CD8-positive, alpha-beta memory T cell (primary cell): ENCODE measurements at regions of chr10 and their contacts with region 1.

Region 1: GRCh38 chr10:30534465-30535144 is 94.9 kb downstream of the LYZL2 start:
- DNase-seq: peak; percentile 48 to 81 (median 68)
- H3K4me3 ChIP-seq: no peak overlapping the region
- H3K4me3 Mint-ChIP-seq: peak overlapping the region in 1 of 7 donors; percentile 73
- H3K27ac ChIP-seq: no peak overlapping the region
- H3K27ac Mint-ChIP-seq: peak overlapping the region in 5 of 8 donors; percentile 6 to 50 (median 11)
- H3K4me1 ChIP-seq: peaks cover 22% of the 10 kb centered on the region
- H3K4me1 Mint-ChIP-seq: peaks cover 36 to 52% (median 38%) of the 10 kb centered on the region in 3 donors
- H3K27me3 ChIP-seq: no peaks in the 10 kb centered on the region
- H3K27me3 Mint-ChIP-seq: no peaks in the 10 kb centered on the region

Region 2: DNA sequence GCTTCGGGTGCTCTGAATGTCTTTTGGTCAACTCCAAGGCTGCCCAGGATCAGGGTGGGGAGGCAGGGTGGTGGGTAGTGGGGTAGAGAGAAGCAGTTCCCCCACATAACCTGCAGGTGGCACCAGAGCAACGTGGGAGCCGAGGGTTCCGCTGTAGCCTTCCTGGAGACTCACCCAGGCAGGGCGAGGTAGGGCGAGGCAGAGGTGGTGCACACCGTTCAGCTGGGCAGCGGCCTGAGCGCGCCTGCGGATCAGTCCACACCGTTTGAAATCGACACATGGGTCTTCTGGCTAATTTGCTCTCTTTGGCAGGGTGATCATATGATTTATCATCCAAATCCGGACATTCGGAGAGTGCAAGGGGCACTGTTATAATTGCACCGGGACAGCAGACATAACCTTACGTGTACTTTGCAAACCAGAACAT is 142.0 kb before region 1 on chr10:
- CTCF ChIA-PET with region 1: interaction called, 15 read pairs
- POLR2A ChIA-PET with region 1: interaction called, 3 read pairs
- DNase-seq: peak; percentile 56 to 79 (median 63)
- H3K4me3 ChIP-seq: no peak overlapping the region
- H3K4me3 Mint-ChIP-seq: peak overlapping the region in 1 of 7 donors; percentile 6
- H3K27ac ChIP-seq: no peak overlapping the region
- H3K27ac Mint-ChIP-seq: peak overlapping the region in 1 of 8 donors; percentile 40
- H3K4me1 ChIP-seq: peaks cover 4% of the 10 kb centered on the region
- H3K4me1 Mint-ChIP-seq: peaks cover 3 to 10% (median 4%) of the 10 kb centered on the region in 3 donors
- H3K27me3 ChIP-seq: no peaks in the 10 kb centered on the region
- H3K27me3 Mint-ChIP-seq: peaks cover 11 to 15% of the 10 kb centered on the region in 2 donors

Region 3: GRCh38 chr10:30413996-30414576 is 120.5 kb before region 1 on chr10:
- CTCF ChIA-PET with region 1: interaction called, 66 read pairs
- POLR2A ChIA-PET with region 1: interaction called, 7 read pairs
- DNase-seq: peak in 2 of 5 donors; percentile 37 to 40
- H3K4me3 ChIP-seq: no peak overlapping the region
- H3K4me3 Mint-ChIP-seq: no peak overlapping the region
- H3K27ac ChIP-seq: no peak overlapping the region
- H3K27ac Mint-ChIP-seq: peak overlapping the region in 1 of 8 donors; percentile 11
- H3K4me1 ChIP-seq: peaks cover 10% of the 10 kb centered on the region
- H3K4me1 Mint-ChIP-seq: peaks cover 17 to 21% (median 17%) of the 10 kb centered on the region in 3 donors
- H3K27me3 ChIP-seq: no peaks in the 10 kb centered on the region
- H3K27me3 Mint-ChIP-seq: no peaks in the 10 kb centered on the region

Region 4: GRCh38 chr10:30420266-30420665 is 114.3 kb before region 1 on chr10:
- CTCF ChIA-PET with region 1: interaction called, 21 read pairs
- POLR2A ChIA-PET with region 1: interaction called, 7 read pairs
- DNase-seq: no peak
- H3K4me3 ChIP-seq: no peak overlapping the region
- H3K4me3 Mint-ChIP-seq: no peak overlapping the region
- H3K27ac ChIP-seq: no peak overlapping the region
- H3K27ac Mint-ChIP-seq: peak overlapping the region in 2 of 8 donors; percentile 38 to 65
- H3K4me1 ChIP-seq: peaks cover 10% of the 10 kb centered on the region
- H3K4me1 Mint-ChIP-seq: peaks cover 18 to 22% (median 18%) of the 10 kb centered on the region in 3 donors
- H3K27me3 ChIP-seq: no peaks in the 10 kb centered on the region
- H3K27me3 Mint-ChIP-seq: no peaks in the 10 kb centered on the region

Region 5: DNA sequence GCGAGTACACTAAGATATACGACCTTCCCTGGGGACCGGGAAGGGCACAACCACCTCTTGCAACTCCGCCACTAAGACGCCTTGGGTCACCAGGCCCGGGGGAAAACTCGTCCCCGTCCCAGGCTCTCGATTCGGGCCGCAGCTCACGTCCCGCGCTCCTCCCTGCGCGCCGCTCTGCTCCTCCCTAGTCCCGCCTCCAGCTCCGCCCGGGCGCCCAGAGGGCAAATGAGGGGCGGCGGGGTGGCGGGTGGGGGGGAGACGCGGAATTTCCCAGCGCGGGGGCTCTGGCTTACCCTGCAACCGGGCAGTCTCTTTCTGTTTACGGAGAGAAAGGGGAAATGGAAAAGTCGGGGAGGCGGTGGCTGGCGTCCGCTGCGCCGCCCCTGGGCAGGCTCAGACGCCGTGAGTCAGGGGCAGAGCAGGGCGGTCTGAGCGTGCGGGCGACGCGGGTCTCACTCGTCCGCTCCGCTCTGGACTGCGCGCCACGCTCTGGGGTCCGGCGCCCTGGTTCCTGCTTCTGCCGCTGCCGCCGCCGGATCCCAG is 100.8 kb before region 1 on chr10 and contains the start of gene MAP3K8:
- CTCF ChIA-PET with region 1: interaction called, 13 read pairs
- POLR2A ChIA-PET with region 1: interaction called, 24 read pairs
- DNase-seq: peak; percentile 73 to 87 (median 85)
- H3K4me3 ChIP-seq: peak within 1 kb of the TSS; percentile 61
- H3K4me3 Mint-ChIP-seq: peak within 1 kb of the TSS; percentile 87 to 98 (median 92)
- H3K27ac ChIP-seq: peak within 1 kb of the TSS; percentile 88
- H3K27ac Mint-ChIP-seq: peak within 1 kb of the TSS; percentile 86 to 99 (median 92)
- H3K4me1 ChIP-seq: peaks cover 40% of the 10 kb centered on the region
- H3K4me1 Mint-ChIP-seq: peaks cover 50 to 55% (median 51%) of the 10 kb centered on the region in 3 donors
- H3K27me3 ChIP-seq: no peaks in the 10 kb centered on the region
- H3K27me3 Mint-ChIP-seq: peaks cover 0 to 6% of the 10 kb centered on the region in 2 donors
- total RNA-seq, gene MAP3K8: 40.3 to 42.6 TPM

Region 6: DNA sequence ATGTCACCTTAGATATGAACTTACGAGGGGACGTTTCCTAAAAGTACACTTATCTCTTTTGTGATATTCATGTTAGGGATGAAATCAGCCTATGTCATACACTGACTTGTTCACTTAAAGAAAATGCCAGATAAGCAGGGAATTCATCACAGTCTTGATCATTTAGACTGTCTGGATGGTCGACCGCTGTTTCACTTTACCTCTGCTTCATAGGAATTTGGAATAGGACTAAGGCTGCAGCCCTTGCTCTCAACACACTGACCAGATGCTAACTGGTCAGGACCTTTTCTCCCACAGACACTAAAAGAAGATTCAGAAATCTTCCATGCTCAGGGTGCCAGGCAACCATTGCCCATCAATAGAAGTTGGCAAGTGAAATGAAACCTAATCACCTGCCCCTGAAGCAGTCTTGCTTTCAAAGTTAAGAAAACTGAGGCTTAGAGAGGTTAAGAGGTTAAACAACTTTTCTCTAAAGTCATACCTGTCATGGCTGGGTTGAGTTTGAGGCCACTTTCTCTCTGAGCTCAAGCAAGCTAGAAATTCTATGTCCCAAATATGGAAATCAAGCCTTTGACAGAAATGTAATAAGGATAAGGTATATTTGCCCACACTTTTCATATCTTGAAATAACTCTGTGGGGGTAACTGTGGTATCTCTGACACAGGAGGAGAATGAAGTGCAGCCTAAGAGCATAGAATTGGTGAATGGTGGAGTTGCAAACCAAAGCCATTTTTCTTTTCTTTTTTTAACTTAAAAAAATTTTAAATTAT is 23.5 kb before region 1 on chr10:
- CTCF ChIA-PET with region 1: no interaction called
- POLR2A ChIA-PET with region 1: no interaction called
- DNase-seq: no peak
- H3K4me3 ChIP-seq: no peak overlapping the region
- H3K4me3 Mint-ChIP-seq: no peak overlapping the region
- H3K27ac ChIP-seq: no peak overlapping the region
- H3K27ac Mint-ChIP-seq: peak overlapping the region in 1 of 8 donors; percentile 23
- H3K4me1 ChIP-seq: no peaks in the 10 kb centered on the region
- H3K4me1 Mint-ChIP-seq: peaks cover 17 to 26% (median 21%) of the 10 kb centered on the region in 3 donors
- H3K27me3 ChIP-seq: no peaks in the 10 kb centered on the region
- H3K27me3 Mint-ChIP-seq: peaks cover 0 to 3% of the 10 kb centered on the region in 2 donors

Region 7: DNA sequence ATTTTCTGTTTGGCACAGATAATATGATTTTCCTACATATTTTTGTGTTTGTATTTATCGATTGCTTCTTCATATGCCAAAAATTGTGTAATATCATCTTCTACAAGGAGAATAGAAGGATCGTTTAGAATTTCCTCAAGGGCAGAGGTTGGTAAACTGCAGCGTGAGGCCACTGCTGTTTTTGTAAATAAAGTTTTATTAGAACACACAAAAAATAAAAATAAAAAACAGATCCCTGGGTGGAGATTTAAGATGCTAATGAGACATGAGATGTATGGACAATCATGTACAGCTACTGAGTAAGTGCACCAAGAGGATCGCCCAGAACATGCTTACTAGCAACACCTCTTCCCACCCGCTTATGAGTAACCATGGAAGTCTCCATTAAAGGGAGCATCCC is 85.4 kb after region 1 on chr10:
- CTCF ChIA-PET with region 1: no interaction called
- POLR2A ChIA-PET with region 1: no interaction called
- DNase-seq: no peak
- H3K4me3 ChIP-seq: no peak overlapping the region
- H3K4me3 Mint-ChIP-seq: no peak overlapping the region
- H3K27ac ChIP-seq: no peak overlapping the region
- H3K27ac Mint-ChIP-seq: no peak overlapping the region
- H3K4me1 ChIP-seq: no peaks in the 10 kb centered on the region
- H3K4me1 Mint-ChIP-seq: no peaks in the 10 kb centered on the region
- H3K27me3 ChIP-seq: no peaks in the 10 kb centered on the region
- H3K27me3 Mint-ChIP-seq: peaks cover 9 to 14% of the 10 kb centered on the region in 2 donors